ENCODE measurements at regions of chr6 and their contacts with region 1.

Region 1: DNA sequence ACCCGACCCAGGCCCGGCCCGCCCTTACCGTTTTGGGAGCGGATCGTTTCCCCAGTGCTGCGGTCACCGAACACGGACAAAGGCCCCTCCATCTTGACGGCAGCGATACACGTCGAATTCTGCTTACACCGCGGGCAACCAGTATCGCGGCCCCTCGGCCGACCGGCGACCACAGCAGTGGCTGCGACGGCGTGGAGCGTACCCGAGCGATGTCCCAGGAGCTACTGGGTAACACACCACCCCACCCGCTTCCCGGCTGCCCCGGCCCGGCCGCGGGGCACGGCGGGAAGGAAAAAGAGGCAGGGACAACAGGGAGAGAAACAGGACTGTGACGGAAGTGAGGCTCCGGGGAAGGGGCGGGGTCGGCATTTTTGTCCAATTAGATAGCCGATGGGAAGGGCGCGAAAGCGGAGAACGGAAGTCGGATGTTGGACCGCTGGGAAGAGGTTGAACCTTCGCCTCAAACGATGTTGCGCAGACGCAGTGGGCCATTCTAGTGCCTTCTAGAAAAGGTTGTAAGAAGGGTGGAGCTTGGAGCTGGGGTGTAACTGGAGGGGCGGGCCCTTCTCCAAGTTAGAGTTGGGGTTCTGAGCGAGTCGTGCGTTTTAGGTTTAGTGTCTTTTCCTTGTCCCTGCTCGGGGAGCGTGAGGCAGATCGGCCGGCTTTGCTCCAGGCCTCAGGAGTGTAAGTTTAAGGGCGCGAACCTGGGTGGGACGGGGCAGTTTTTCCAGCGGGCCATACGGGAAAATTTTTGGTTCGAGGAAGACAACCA is at the start of gene TCP1:
- DNase-seq: peak; percentile 98 to 100 (median 100)
- H3K4me3 ChIP-seq: peak within 1 kb of the TSS; percentile 79 to 94 (median 91)
- H3K4me3 Mint-ChIP-seq: peak within 1 kb of the TSS; percentile 94 to 97
- H3K27ac ChIP-seq: peak within 1 kb of the TSS; percentile 85 to 97
- H3K27ac Mint-ChIP-seq: peak within 1 kb of the TSS; percentile 95 to 98 (median 98)
- H3K4me1 ChIP-seq: peaks cover 28 to 38% of the 10 kb centered on the region in 2 donors
- H3K4me1 Mint-ChIP-seq: peaks cover 32% of the 10 kb centered on the region
- H3K27me3 ChIP-seq: no peaks in the 10 kb centered on the region
- H3K27me3 Mint-ChIP-seq: peaks cover 0 to 1% (median 0%) of the 10 kb centered on the region in 3 donors
- CTCF ChIP-seq: no peak
- polyA plus RNA-seq, gene TCP1: 44.5 to 79.5 (median 69.3) TPM

Region 2: GRCh38 chr6:159739341-159739740 is 50.2 kb before region 1 on chr6:
- intact Hi-C with region 1: loop called in 1 of 2 experiments (anchors 5 kb)
- DNase-seq: peak in 2 of 3 donors; percentile 39 to 60
- H3K4me3 ChIP-seq: no peak overlapping the region
- H3K4me3 Mint-ChIP-seq: no peak overlapping the region
- H3K27ac ChIP-seq: peak overlapping the region in 1 of 2 donors; percentile 68
- H3K27ac Mint-ChIP-seq: peak overlapping the region in 6 of 7 donors; percentile 15 to 72 (median 56)
- H3K4me1 ChIP-seq: peaks cover 11 to 22% of the 10 kb centered on the region in 2 donors
- H3K4me1 Mint-ChIP-seq: peaks cover 26% of the 10 kb centered on the region
- H3K27me3 ChIP-seq: no peaks in the 10 kb centered on the region
- H3K27me3 Mint-ChIP-seq: no peaks in the 10 kb centered on the region
- CTCF ChIP-seq: no peak

Region 3: GRCh38 chr6:159754959-159755914 is 34.3 kb before region 1 on chr6:
- intact Hi-C with region 1: loop called in 1 of 2 experiments (anchors 5 kb)
- DNase-seq: no peak
- H3K4me3 ChIP-seq: no peak overlapping the region
- H3K4me3 Mint-ChIP-seq: no peak overlapping the region
- H3K27ac ChIP-seq: peak overlapping the region in 1 of 2 donors; percentile 15
- H3K27ac Mint-ChIP-seq: peak overlapping the region in 4 of 7 donors; percentile 1 to 67 (median 20)
- H3K4me1 ChIP-seq: peaks cover 2 to 6% of the 10 kb centered on the region in 2 donors
- H3K4me1 Mint-ChIP-seq: peaks cover 6% of the 10 kb centered on the region
- H3K27me3 ChIP-seq: no peaks in the 10 kb centered on the region
- H3K27me3 Mint-ChIP-seq: no peaks in the 10 kb centered on the region
- CTCF ChIP-seq: no peak

Region 4: GRCh38 chr6:159829526-159829925 is 40.0 kb after region 1 on chr6:
- intact Hi-C with region 1: no loop called
- DNase-seq: peak; percentile 29 to 37 (median 34)
- H3K4me3 ChIP-seq: peak overlapping the region in 1 of 3 experiments; percentile 7
- H3K4me3 Mint-ChIP-seq: peak overlapping the region in 1 of 2 donors; percentile 59
- H3K27ac ChIP-seq: peak overlapping the region; percentile 26 to 39
- H3K27ac Mint-ChIP-seq: peak overlapping the region; percentile 17 to 85 (median 76)
- H3K4me1 ChIP-seq: peaks cover 28 to 32% of the 10 kb centered on the region in 2 donors
- H3K4me1 Mint-ChIP-seq: peaks cover 30% of the 10 kb centered on the region
- H3K27me3 ChIP-seq: no peaks in the 10 kb centered on the region
- H3K27me3 Mint-ChIP-seq: peaks cover 0 to 4% (median 2%) of the 10 kb centered on the region in 3 donors
- CTCF ChIP-seq: no peak

Region 5: GRCh38 chr6:159989492-159990480 is 200.2 kb after region 1 on chr6:
- intact Hi-C with region 1: no loop called
- DNase-seq: peak; percentile 73 to 84 (median 74)
- H3K4me3 ChIP-seq: peak overlapping the region in 1 of 3 experiments; percentile 38
- H3K4me3 Mint-ChIP-seq: peak overlapping the region in 1 of 2 donors; percentile 31
- H3K27ac ChIP-seq: peak overlapping the region; percentile 27 to 66
- H3K27ac Mint-ChIP-seq: peak overlapping the region; percentile 74 to 89 (median 80)
- H3K4me1 ChIP-seq: peaks cover 44 to 62% of the 10 kb centered on the region in 2 donors
- H3K4me1 Mint-ChIP-seq: peaks cover 63% of the 10 kb centered on the region
- H3K27me3 ChIP-seq: no peaks in the 10 kb centered on the region
- H3K27me3 Mint-ChIP-seq: peaks cover 2 to 6% (median 5%) of the 10 kb centered on the region in 3 donors
- CTCF ChIP-seq: no peak

Region 6: DNA sequence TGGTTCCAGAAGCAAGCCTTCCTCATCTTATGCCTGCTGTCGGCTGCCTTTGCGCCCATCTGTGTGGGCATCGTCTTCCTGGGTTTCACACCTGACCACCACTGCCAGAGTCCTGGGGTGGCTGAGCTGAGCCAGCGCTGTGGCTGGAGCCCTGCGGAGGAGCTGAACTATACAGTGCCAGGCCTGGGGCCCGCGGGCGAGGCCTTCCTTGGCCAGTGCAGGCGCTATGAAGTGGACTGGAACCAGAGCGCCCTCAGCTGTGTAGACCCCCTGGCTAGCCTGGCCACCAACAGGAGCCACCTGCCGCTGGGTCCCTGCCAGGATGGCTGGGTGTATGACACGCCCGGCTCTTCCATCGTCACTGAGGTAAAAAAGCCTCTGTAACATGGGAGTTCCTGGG is 332.4 kb after region 1 on chr6:
- intact Hi-C with region 1: no loop called
- DNase-seq: no peak
- H3K4me3 ChIP-seq: no peak overlapping the region
- H3K4me3 Mint-ChIP-seq: no peak overlapping the region
- H3K27ac ChIP-seq: no peak overlapping the region
- H3K27ac Mint-ChIP-seq: no peak overlapping the region
- H3K4me1 ChIP-seq: no peaks in the 10 kb centered on the region
- H3K4me1 Mint-ChIP-seq: no peaks in the 10 kb centered on the region
- H3K27me3 ChIP-seq: no peaks in the 10 kb centered on the region
- H3K27me3 Mint-ChIP-seq: peaks cover 5 to 12% (median 9%) of the 10 kb centered on the region in 3 donors
- CTCF ChIP-seq: no peak